ENCODE measurements at regions of chr1 and their contacts with region 1.

Region 1: GRCh38 chr1:46223472-46223943 is 20.4 kb downstream of the LURAP1 start:
- DNase-seq: peak; percentile 87
- H3K4me3 ChIP-seq: no peak overlapping the region
- H3K27ac ChIP-seq: no peak overlapping the region
- H3K4me1 ChIP-seq: peaks cover 2% of the 10 kb centered on the region
- H3K27me3 ChIP-seq: no peaks in the 10 kb centered on the region
- CTCF ChIP-seq: peak; percentile 88 to 98
- POLR2A ChIP-seq: no peak

Region 2: GRCh38 chr1:46036894-46037839 is 186.3 kb before region 1 on chr1:
- CTCF ChIA-PET with region 1: interaction called, 146 read pairs
- POLR2A ChIA-PET with region 1: no interaction called
- dilution Hi-C with region 1: no loop called
- intact Hi-C with region 1: loop called (anchors 1 kb)
- DNase-seq: peak; percentile 84
- H3K4me3 ChIP-seq: no peak overlapping the region
- H3K27ac ChIP-seq: no peak overlapping the region
- H3K4me1 ChIP-seq: peaks cover 4% of the 10 kb centered on the region
- H3K27me3 ChIP-seq: no peaks in the 10 kb centered on the region
- CTCF ChIP-seq: peak; percentile 96 to 97
- POLR2A ChIP-seq: no peak

Region 3: GRCh38 chr1:46132529-46133180 is 90.9 kb before region 1 on chr1 and contains the start of gene PIK3R3:
- CTCF ChIA-PET with region 1: interaction called, 9 read pairs
- POLR2A ChIA-PET with region 1: no interaction called
- dilution Hi-C with region 1: no loop called
- intact Hi-C with region 1: loop called (anchors 1 kb)
- DNase-seq: peak; percentile 99
- H3K4me3 ChIP-seq: peak within 1 kb of the TSS; percentile 79 to 99 (median 92)
- H3K27ac ChIP-seq: peak within 1 kb of the TSS; percentile 86
- H3K4me1 ChIP-seq: peaks cover 24% of the 10 kb centered on the region
- H3K27me3 ChIP-seq: no peaks in the 10 kb centered on the region
- CTCF ChIP-seq: no peak
- POLR2A ChIP-seq: peak; percentile 99
- total RNA-seq, gene PIK3R3: 14.3 and 14.6 TPM in 2 replicates

Region 4: GRCh38 chr1:46197964-46198811 is 25.3 kb before region 1 on chr1 and contains the start of gene POMGNT1:
- CTCF ChIA-PET with region 1: interaction called, 35 read pairs
- POLR2A ChIA-PET with region 1: no interaction called
- dilution Hi-C with region 1: no loop called
- intact Hi-C with region 1: loop called (anchors 1 kb)
- DNase-seq: peak; percentile 63
- H3K4me3 ChIP-seq: peak within 1 kb of the TSS; percentile 26 to 88 (median 64)
- H3K27ac ChIP-seq: peak within 1 kb of the TSS; percentile 39
- H3K4me1 ChIP-seq: peaks cover 8% of the 10 kb centered on the region
- H3K27me3 ChIP-seq: no peaks in the 10 kb centered on the region
- CTCF ChIP-seq: peak in 1 of 2 donors; percentile 19
- POLR2A ChIP-seq: peak; percentile 88
- total RNA-seq, gene POMGNT1: 64.4 and 66.9 TPM in 2 replicates

Region 5: DNA sequence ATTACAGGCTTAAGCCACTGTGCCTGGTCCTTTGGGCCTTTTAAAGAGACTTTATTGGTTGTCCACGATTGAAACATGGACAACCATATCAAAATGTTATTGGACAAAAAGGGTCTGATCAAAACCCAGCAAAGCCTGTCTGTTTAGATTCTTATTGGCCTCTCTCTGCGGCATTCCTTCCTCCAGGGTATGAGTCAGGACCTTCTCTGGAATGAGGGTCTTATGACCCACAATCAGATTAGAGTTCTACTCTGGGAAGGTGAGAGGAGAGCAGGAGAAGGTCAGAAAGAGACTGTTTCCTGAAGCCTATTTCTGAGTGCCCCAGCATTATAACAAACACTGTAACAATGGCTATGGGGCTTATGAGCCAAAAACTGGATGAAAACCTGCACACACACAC is 12.5 kb before region 1 on chr1:
- CTCF ChIA-PET with region 1: interaction called, 15 read pairs
- POLR2A ChIA-PET with region 1: no interaction called
- dilution Hi-C with region 1: no loop called
- intact Hi-C with region 1: no loop called
- DNase-seq: peak; percentile 10
- H3K4me3 ChIP-seq: no peak overlapping the region
- H3K27ac ChIP-seq: no peak overlapping the region
- H3K4me1 ChIP-seq: no peaks in the 10 kb centered on the region
- H3K27me3 ChIP-seq: no peaks in the 10 kb centered on the region
- CTCF ChIP-seq: no peak
- POLR2A ChIP-seq: no peak

Region 6: DNA sequence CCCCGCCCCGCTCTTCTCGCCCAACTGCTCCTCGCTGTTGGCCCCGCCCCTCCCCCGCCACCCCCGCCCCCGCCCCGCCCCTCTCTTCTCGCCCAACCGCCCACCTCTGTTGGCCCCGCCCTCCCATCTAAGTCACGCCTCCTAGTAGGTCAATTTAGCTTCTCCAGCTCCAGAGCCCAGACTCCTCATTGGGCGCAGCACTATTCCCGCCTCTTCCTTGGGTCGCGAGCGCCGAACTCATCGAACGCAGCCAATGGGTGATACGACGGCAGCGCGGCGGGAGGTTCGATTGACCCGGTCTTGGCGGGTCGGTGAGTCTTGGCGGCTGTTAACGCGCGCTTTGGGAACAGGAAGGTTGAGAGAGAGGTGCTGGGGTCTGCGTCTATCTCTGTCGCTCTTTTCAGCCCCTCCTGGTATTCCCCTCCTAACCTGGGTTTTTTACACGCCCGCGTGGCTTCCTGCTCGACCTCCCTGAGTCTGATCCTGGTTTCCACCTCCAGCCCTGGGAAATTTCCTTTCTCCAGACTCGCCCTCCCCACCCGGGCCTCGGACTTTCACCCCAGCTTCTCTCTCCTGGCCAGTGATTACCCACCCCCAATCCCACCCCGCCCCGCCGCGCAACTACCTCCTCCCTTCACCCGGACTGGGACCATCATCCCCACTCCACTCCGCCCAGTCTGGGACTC is 24.1 kb after region 1 on chr1 and contains the start of gene RAD54L:
- CTCF ChIA-PET with region 1: interaction called, 25 read pairs
- POLR2A ChIA-PET with region 1: interaction called, 3 read pairs
- dilution Hi-C with region 1: no loop called
- intact Hi-C with region 1: no loop called
- DNase-seq: peak; percentile 97
- H3K4me3 ChIP-seq: peak within 1 kb of the TSS; percentile 75 to 92 (median 82)
- H3K27ac ChIP-seq: peak within 1 kb of the TSS; percentile 48
- H3K4me1 ChIP-seq: peaks cover 20% of the 10 kb centered on the region
- H3K27me3 ChIP-seq: no peaks in the 10 kb centered on the region
- CTCF ChIP-seq: no peak
- POLR2A ChIP-seq: peak; percentile 42
- total RNA-seq, gene RAD54L: 18.9 and 19.7 TPM in 2 replicates